Activated naive CD8-positive, alpha-beta T cell treated with anti-CD3 and anti-CD28 coated beads, Interleukin-2, amount 10 ng/mL, durations not matched to agents 7 days and 5 days (primary cell): ENCODE measurements at regions of chr14 and their contacts with region 1.

Region 1: DNA sequence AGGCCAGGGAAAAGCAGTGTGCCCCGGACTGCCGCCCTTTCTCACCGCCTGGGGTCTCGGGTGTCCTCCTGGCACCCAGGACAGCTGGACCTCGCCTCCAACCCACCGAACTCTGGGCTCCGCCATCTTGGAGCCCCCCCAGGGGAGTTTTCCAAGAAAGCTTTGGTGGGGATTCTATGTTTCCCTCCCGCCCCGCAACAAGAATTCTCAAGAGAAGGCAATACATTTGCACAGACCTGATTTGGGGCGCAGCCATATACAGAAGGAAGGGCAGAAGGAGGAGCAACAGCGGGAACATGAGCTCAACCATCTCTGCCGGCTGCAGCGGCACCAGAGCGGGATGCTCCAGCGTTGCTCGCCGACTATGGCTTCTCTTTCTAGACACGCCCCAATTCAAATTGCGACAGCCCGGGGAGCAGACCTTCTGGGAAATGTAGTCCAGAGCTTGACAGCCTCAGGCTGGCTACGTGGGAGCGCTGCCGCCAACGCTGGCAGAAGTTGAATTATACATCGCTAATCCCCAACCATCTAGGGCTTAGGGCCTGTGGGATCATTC is at the start of gene RDH11:
- DNase-seq: peak; percentile 78
- ATAC-seq: peak; percentile 87
- H3K4me3 Mint-ChIP-seq: peak within 1 kb of the TSS; percentile 99
- H3K27ac Mint-ChIP-seq: peak within 1 kb of the TSS; percentile 99
- H3K4me1 Mint-ChIP-seq: peaks cover 19% of the 10 kb centered on the region
- H3K27me3 Mint-ChIP-seq: no peaks in the 10 kb centered on the region
- total RNA-seq, gene RDH11: 54.9 to 55.5 TPM

Region 2: DNA sequence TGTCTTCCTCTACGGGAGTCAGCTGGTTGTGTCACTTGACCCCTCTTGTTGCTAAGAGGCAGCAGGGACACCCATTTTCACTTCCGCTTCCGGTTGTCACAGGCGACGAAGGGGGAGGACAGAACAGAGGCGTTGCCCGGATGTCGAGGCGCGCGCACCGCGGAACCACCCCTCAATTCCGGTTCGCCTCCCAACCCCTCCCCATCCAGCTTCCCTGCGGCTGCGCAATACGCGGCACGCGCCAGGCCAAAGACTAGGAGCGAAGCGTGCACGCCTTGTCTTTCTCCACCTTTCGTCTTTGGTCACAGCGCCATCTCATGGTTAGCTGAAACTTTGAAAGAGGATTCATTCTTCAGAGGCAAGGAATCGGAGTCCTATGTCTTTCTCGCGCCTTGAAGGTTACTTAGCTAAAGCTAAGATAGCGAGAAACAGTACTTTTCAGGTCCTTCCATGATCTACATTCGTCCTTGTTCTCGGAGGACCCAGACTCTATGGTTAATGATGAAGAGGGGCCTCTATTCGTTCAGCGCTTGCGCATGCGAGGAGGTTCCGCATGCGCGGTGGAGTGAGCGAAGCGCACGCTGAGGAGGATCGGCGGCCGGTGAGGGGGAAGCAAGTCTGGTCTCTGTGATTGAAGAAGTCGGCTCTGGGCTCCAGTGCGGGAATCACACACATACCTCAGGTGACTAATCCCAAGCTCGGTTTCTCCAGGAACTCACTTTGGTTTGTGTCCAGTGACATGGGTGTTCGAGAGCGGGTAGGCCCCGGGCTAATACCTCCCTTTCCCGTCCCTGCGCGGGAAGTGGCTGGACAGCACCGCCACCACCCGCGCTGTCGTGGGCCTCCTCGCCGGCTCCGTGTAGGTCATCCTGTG is 335.5 kb before region 1 on chr14 and contains the starts of genes ATP6V1D and EIF2S1:
- POLR2A ChIA-PET with region 1: interaction called, 10 read pairs
- DNase-seq: peak; percentile 98
- ATAC-seq: peak; percentile 93
- H3K4me3 Mint-ChIP-seq: peak within 1 kb of the TSS; percentile 98
- H3K27ac Mint-ChIP-seq: peak within 1 kb of the TSS; percentile 96
- H3K4me1 Mint-ChIP-seq: peaks cover 43% of the 10 kb centered on the region
- H3K27me3 Mint-ChIP-seq: no peaks in the 10 kb centered on the region
- total RNA-seq, gene ATP6V1D: 38.7 to 41.9 TPM
- total RNA-seq, gene EIF2S1: 93.2 to 103 TPM

Region 3: GRCh38 chr14:67674481-67675169 is 20.8 kb before region 1 on chr14 and contains the start of gene VTI1B:
- POLR2A ChIA-PET with region 1: interaction called, 14 read pairs
- DNase-seq: peak; percentile 85
- ATAC-seq: peak; percentile 91
- H3K4me3 Mint-ChIP-seq: peak within 1 kb of the TSS; percentile 87
- H3K27ac Mint-ChIP-seq: peak within 1 kb of the TSS; percentile 87
- H3K4me1 Mint-ChIP-seq: peaks cover 18% of the 10 kb centered on the region
- H3K27me3 Mint-ChIP-seq: no peaks in the 10 kb centered on the region
- total RNA-seq, gene VTI1B: 69.9 to 74.6 TPM

Region 4: GRCh38 chr14:67722293-67722692 is 26.8 kb after region 1 on chr14:
- POLR2A ChIA-PET with region 1: no interaction called
- DNase-seq: no peak
- ATAC-seq: no peak
- H3K4me3 Mint-ChIP-seq: no peak overlapping the region
- H3K27ac Mint-ChIP-seq: no peak overlapping the region
- H3K4me1 Mint-ChIP-seq: peaks cover 8% of the 10 kb centered on the region
- H3K27me3 Mint-ChIP-seq: peaks cover 44% of the 10 kb centered on the region